ENCODE measurements at regions of chr17 and their contacts with region 1.

Region 1: GRCh38 chr17:31216053-31216751 is 80.8 kb downstream of the OMG start:
- DNase-seq: no peak
- H3K4me3 ChIP-seq: no peak overlapping the region
- H3K27ac ChIP-seq: peak overlapping the region in 3 of 59 donors; percentile 5 to 36 (median 18)
- H3K27me3 ChIP-seq: no peaks in the 10 kb centered on the region
- CTCF ChIP-seq: peak; percentile 63 to 95 (median 79)

Region 2: GRCh38 chr17:31013844-31014243 is 202.4 kb before region 1 on chr17:
- intact Hi-C with region 1: loop called (anchors 5 kb)
- DNase-seq: no peak
- H3K4me3 ChIP-seq: no peak overlapping the region
- H3K27ac ChIP-seq: no peak overlapping the region
- H3K27me3 ChIP-seq: no peaks in the 10 kb centered on the region
- CTCF ChIP-seq: no peak

Region 3: GRCh38 chr17:31256936-31257335 is 40.7 kb after region 1 on chr17:
- intact Hi-C with region 1: no loop called
- DNase-seq: no peak
- H3K4me3 ChIP-seq: no peak overlapping the region
- H3K27ac ChIP-seq: peak overlapping the region in 1 of 59 donors; percentile 10
- H3K27me3 ChIP-seq: no peaks in the 10 kb centered on the region
- CTCF ChIP-seq: no peak

Measured in dorsolateral prefrontal cortex (tissue), 120 donors.